ENCODE measurements at regions of chrX and their contacts with region 1.

Region 1: DNA sequence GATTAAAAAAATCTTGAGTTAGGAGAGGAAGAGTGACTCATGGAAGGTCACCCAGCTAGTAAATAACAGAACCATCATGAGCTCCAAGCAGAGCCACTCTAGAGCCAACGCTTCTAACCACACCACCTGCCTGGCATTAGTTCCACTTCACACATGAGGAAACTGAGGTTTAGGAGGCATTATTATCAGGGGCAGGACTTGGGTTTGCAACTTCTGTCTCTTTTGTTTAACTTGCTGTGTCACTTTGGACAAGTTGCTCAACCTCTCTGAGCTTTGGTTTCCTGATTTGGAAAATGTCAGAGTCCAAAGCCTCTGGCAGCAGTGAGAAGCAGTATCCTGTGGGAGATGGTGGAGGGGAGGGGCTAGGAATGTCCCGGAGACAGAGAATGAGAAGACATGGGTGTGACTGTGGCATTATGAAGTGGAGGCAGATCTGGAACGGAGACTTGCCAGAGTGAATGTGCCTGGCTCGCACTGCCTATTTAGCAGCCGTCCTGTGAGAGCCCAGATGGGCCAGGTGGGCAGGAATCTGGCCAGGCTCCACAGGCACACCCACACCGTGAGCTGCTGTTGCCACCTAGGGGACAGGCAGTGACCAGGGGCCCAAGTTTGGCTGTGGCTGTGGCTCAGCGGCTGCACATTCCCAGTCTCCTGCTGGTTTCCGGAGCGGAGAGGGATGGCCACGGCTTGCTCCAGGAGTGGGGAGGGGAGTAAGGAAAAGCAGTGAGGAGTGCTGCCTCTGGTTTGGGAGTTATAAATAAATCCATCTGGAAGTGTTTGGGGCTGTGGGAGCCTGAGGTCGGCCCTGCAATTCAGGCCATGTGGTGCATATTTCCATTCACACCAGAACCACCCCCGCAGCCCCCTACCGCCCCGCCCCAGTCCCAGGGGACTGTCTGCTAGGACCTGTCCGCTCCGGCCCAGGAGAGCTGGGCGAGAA is 93.4 kb downstream of the NHSL2 start:
- DNase-seq: no peak
- H3K4me3 ChIP-seq: no peak overlapping the region
- H3K27ac ChIP-seq: peak overlapping the region in 2 of 4 donors; percentile 6 to 34
- H3K4me1 ChIP-seq: no peaks in the 10 kb centered on the region
- H3K27me3 ChIP-seq: no peaks in the 10 kb centered on the region
- CTCF ChIP-seq: peak in 1 of 5 experiments; percentile 10
- EP300 ChIP-seq: no peak
- POLR2A ChIP-seq: no peak

Region 2: GRCh38 chrX:72110051-72110877 is 106.2 kb after region 1 on chrX:
- in situ Hi-C with region 1: loop called in 1 of 4 experiments (anchors 10 kb)
- intact Hi-C with region 1: no loop called
- DNase-seq: no peak
- H3K4me3 ChIP-seq: no peak overlapping the region
- H3K27ac ChIP-seq: no peak overlapping the region
- H3K4me1 ChIP-seq: no peaks in the 10 kb centered on the region
- H3K27me3 ChIP-seq: no peaks in the 10 kb centered on the region
- CTCF ChIP-seq: no peak
- EP300 ChIP-seq: no peak
- POLR2A ChIP-seq: no peak

Region 3: DNA sequence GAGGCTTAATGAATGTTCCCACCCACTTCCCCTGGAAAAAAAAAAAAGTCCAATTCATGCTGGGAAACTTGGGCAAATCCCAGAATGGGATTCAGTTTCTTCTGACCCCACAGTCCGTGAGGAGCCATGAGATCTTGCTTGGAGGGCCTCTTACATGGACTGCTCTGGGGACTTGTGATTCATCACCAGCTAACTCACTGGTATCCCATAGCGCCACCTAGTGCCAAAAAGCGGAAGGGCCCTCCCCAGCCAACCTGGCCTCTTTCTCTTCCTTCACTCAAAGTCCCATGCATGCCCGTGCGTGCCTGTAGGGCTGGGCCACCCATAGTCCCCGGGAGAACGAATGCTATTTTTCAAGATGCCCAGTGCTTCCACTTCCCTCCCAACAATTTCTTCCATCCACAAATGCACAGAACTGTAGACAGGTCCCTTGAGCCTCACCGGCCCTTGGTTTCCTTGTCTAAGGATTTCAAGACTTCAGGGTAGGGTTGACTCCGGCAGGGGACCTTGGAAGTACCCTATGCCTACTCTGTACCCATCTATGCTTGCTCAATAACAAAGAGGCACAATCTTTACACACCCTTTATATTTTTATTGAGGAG is 122.6 kb after region 1 on chrX:
- in situ Hi-C with region 1: loop called in 3 of 4 experiments (anchors 5 to 25 kb)
- intact Hi-C with region 1: no loop called
- DNase-seq: peak; percentile 87
- H3K4me3 ChIP-seq: no peak overlapping the region
- H3K27ac ChIP-seq: peak overlapping the region; percentile 35 to 63 (median 52)
- H3K4me1 ChIP-seq: peaks cover 3 to 24% (median 4%) of the 10 kb centered on the region in 4 donors
- H3K27me3 ChIP-seq: peaks cover 10% of the 10 kb centered on the region
- CTCF ChIP-seq: peak; percentile 71 to 78 (median 73)
- EP300 ChIP-seq: no peak
- POLR2A ChIP-seq: no peak